Left cardiac atrium (tissue), 4 donors: ENCODE measurements at regions of chr15 and their contacts with region 1.

Region 1: DNA sequence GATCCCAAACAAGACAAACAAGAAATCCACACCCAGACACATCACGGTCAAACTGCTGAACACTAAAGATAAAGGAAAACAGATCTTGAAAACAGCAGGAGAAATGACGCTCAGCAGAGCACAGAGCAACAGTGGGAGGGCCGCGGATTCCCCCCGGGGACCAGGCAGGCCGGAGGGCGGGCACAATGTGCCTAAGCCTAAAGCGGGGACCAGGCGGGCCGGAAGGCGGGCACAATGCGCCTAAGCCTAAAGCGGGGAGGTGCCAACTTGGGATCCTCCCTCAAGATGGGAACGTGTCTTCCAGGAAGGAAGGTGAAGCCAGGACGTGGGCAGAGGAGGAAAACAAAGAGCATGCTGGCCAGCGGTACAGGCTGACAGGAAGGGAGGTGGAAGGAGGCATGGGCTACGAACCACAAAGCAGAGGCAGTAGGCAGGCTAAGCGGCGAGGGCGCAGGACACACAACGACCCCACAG is 31.1 kb downstream of the CYFIP1 start:
- DNase-seq: peak; percentile 85
- ATAC-seq: peak; percentile 77 to 90

Region 2: DNA sequence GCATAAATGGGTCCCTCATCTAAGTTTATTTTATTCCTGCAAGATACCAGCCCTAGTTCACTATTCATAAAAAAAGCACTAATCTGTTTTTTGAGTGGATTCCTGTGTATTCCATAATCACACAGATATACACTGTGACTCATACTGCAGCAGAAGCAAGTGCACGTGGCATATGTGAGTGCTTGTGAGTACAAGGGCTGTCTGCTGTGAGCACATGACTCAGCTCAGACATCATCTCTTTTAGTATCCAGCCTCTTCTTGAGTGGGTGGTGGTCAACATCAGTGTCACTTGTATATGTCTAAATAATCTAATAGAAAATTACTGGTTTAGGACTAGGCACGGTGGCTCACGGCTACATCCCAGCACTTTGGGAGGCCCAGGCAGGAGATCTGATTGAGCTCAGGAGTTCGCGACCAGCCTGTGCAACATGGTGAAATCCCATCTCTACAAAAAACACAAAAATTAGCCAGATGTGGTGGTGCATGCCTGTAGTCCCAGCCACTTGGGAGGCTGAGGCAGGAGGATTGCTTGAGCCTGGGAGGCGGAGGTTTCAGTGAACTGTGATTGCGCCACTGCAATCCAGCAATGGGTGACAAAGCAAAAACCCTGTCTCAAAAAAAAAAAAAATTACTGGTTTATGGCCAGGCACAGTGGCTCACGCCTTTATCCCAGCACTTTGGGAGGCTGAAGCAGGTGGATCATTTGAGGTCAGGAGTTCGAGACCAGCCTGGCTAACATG is 60.8 kb before region 1 on chr15:
- intact Hi-C with region 1: loop called in 1 of 2 experiments (anchors 10 kb)
- DNase-seq: no peak
- ATAC-seq: peak in 1 of 2 donors; percentile 91

Region 3: GRCh38 chr15:23003736-23004135 is 54.6 kb after region 1 on chr15:
- intact Hi-C with region 1: no loop called
- DNase-seq: no peak
- ATAC-seq: no peak